ENCODE measurements at regions of chr1 and their contacts with region 1.

Region 1: GRCh38 chr1:57204942-57205787 is 218.7 kb downstream of the DAB1 start:
- DNase-seq: no peak
- ATAC-seq: no peak; the same call in 1 of the 2 replicates
- H3K4me3 ChIP-seq: no peak overlapping the region
- H3K27ac ChIP-seq: no peak overlapping the region
- H3K4me1 ChIP-seq: no peaks in the 10 kb centered on the region
- H3K27me3 ChIP-seq: no peaks in the 10 kb centered on the region
- CTCF ChIP-seq: no peak
- POLR2A ChIP-seq: no peak
- RAD21 ChIP-seq: no peak

Region 2: DNA sequence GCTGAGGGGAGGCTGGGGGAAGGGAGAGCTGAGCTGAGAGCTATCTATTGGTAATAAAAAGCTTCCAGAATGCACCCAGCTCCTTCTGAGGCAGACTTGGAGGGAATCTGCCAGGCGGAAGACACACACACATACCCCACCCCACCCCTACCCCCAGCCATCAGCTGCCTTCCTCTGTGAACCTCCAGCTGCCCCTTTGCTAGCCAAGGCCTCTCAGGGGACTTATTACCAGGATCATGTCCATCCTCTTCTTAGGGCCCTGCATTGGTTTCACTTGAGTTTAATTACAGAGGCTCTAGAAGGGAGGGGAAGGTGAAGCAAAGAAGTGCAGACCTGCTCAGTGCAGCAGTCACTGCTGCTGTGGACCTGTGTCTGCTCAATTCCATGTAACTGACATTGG is 1184.9 kb after region 1 on chr1:
- CTCF ChIA-PET with region 1: no interaction called
- POLR2A ChIA-PET with region 1: interaction called, 21 read pairs
- dilution Hi-C with region 1: no loop called
- in situ Hi-C with region 1: no loop called
- intact Hi-C with region 1: no loop called
- DNase-seq: no peak
- ATAC-seq: no peak
- H3K4me3 ChIP-seq: no peak overlapping the region
- H3K27ac ChIP-seq: no peak overlapping the region
- H3K4me1 ChIP-seq: peaks cover 1% of the 10 kb centered on the region; the same call in 1 of the 2 replicates
- H3K27me3 ChIP-seq: no peaks in the 10 kb centered on the region
- CTCF ChIP-seq: no peak
- POLR2A ChIP-seq: no peak
- RAD21 ChIP-seq: no peak